Gastrocnemius medialis (tissue), 4 donors: ENCODE measurements at regions of chr20 and their contacts with region 1.

Region 1: GRCh38 chr20:31547017-31547675 is 32.9 kb downstream of the HM13 start:
- DNase-seq: peak; percentile 73 to 85
- ATAC-seq: peak; percentile 83 to 85
- H3K4me3 ChIP-seq: peak overlapping the region; percentile 47 to 69 (median 62)
- H3K27ac ChIP-seq: peak overlapping the region; percentile 83 to 92 (median 86)
- H3K4me1 ChIP-seq: peaks cover 6 to 12% of the 10 kb centered on the region in 2 donors
- H3K27me3 ChIP-seq: no peaks in the 10 kb centered on the region
- CTCF ChIP-seq: peak in 1 of 5 experiments; percentile 30
- POLR2A ChIP-seq: peak; percentile 57 to 70

Region 2: GRCh38 chr20:31452575-31452974 is 94.6 kb before region 1 on chr20:
- in situ Hi-C with region 1: no loop called
- intact Hi-C with region 1: no loop called
- DNase-seq: no peak
- ATAC-seq: no peak
- H3K4me3 ChIP-seq: no peak overlapping the region
- H3K27ac ChIP-seq: no peak overlapping the region
- H3K4me1 ChIP-seq: no peaks in the 10 kb centered on the region
- H3K27me3 ChIP-seq: no peaks in the 10 kb centered on the region
- CTCF ChIP-seq: no peak
- POLR2A ChIP-seq: no peak

Region 3: GRCh38 chr20:31514159-31515071 is 32.7 kb before region 1 on chr20 and contains the start of gene HM13:
- in situ Hi-C with region 1: no loop called
- intact Hi-C with region 1: loop called (anchors 2 kb)
- DNase-seq: peak; percentile 86 to 89
- ATAC-seq: peak; percentile 89 to 93
- H3K4me3 ChIP-seq: peak within 1 kb of the TSS; percentile 72 to 96 (median 88)
- H3K27ac ChIP-seq: peak within 1 kb of the TSS; percentile 88 to 95 (median 90)
- H3K4me1 ChIP-seq: peaks cover 27 to 34% of the 10 kb centered on the region in 2 donors
- H3K27me3 ChIP-seq: no peaks in the 10 kb centered on the region
- CTCF ChIP-seq: peak; percentile 87 to 99 (median 99)
- POLR2A ChIP-seq: peak; percentile 89 to 96
- total RNA-seq, gene HM13: 22.7 to 31.0 (median 26.4) TPM

Region 4: GRCh38 chr20:32109392-32110172 is 562.4 kb after region 1 on chr20 and contains the start of gene TM9SF4:
- in situ Hi-C with region 1: loop called in 1 of 4 experiments (anchors 25 kb)
- intact Hi-C with region 1: no loop called
- DNase-seq: peak; percentile 85
- ATAC-seq: peak; percentile 97 to 99
- H3K4me3 ChIP-seq: peak within 1 kb of the TSS; percentile 94 to 100 (median 96)
- H3K27ac ChIP-seq: peak within 1 kb of the TSS; percentile 98 to 100 (median 99)
- H3K4me1 ChIP-seq: peaks cover 17 to 30% of the 10 kb centered on the region in 2 donors
- H3K27me3 ChIP-seq: no peaks in the 10 kb centered on the region
- CTCF ChIP-seq: no peak
- POLR2A ChIP-seq: peak; percentile 57 to 62
- total RNA-seq, gene TM9SF4: 18.0 to 22.9 (median 21.0) TPM